Mammary epithelial cell (primary cell): ENCODE measurements at regions of chr16 and their contacts with region 1.

Region 1: DNA sequence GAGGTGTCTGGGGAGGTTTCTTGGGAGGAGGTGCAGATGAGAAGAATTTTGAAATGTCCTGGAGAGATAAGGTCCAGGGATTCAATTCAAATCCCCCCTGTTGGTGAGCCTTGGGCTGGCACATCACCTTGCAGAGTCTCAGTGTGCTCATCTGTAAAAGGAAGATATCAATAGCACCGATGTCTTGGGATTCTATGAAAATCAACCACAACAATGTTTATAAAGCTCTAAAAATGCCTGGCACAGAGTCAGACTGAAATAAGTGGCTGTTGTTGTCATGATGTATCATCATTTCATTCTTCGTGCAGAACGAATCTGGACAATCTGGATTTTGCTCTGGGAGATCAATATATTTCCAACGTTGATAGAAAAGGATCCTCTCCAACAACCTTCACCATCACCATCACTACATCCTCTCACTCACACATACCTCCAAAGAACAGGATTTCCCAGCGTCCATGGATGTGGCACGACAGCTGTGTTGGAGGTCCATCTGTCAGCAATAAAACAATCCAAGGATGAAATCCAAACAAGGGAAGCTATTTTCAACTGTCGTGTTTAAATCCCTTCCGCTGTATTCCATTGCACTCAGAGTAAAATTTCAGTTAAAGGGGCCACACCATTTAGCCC is 393.7 kb upstream of the DYNLRB2 start:
- DNase-seq: no peak
- H3K4me3 ChIP-seq: no peak overlapping the region
- H3K27ac ChIP-seq: no peak overlapping the region
- H3K4me1 ChIP-seq: no peaks in the 10 kb centered on the region
- H3K27me3 ChIP-seq: no peaks in the 10 kb centered on the region
- CTCF ChIP-seq: no peak

Region 2: GRCh38 chr16:80045861-80046260 is 101.3 kb before region 1 on chr16:
- CTCF ChIA-PET with region 1: no interaction called
- dilution Hi-C with region 1: loop called (anchors 5 kb)
- in situ Hi-C with region 1: no loop called
- intact Hi-C with region 1: no loop called
- DNase-seq: no peak
- H3K4me3 ChIP-seq: no peak overlapping the region
- H3K27ac ChIP-seq: no peak overlapping the region
- H3K4me1 ChIP-seq: peaks cover under 1% of the 10 kb centered on the region
- H3K27me3 ChIP-seq: no peaks in the 10 kb centered on the region
- CTCF ChIP-seq: no peak

Region 3: GRCh38 chr16:80084685-80085084 is 62.5 kb before region 1 on chr16:
- CTCF ChIA-PET with region 1: no interaction called
- dilution Hi-C with region 1: no loop called
- in situ Hi-C with region 1: no loop called
- intact Hi-C with region 1: no loop called
- DNase-seq: peak; percentile 57
- H3K4me3 ChIP-seq: no peak overlapping the region
- H3K27ac ChIP-seq: no peak overlapping the region
- H3K4me1 ChIP-seq: no peaks in the 10 kb centered on the region
- H3K27me3 ChIP-seq: no peaks in the 10 kb centered on the region
- CTCF ChIP-seq: peak; percentile 58 to 72